ENCODE measurements at regions of chr14 and their contacts with region 1.

Region 1: GRCh38 chr14:23727566-23728335 is 91.6 kb downstream of the DHRS2 start:
- DNase-seq: peak; percentile 37
- H3K4me3 ChIP-seq: no peak overlapping the region
- H3K27ac ChIP-seq: no peak overlapping the region
- H3K4me1 ChIP-seq: no peaks in the 10 kb centered on the region
- H3K27me3 ChIP-seq: no peaks in the 10 kb centered on the region
- CTCF ChIP-seq: peak; percentile 27 to 32
- POLR2A ChIP-seq: no peak

Region 2: DNA sequence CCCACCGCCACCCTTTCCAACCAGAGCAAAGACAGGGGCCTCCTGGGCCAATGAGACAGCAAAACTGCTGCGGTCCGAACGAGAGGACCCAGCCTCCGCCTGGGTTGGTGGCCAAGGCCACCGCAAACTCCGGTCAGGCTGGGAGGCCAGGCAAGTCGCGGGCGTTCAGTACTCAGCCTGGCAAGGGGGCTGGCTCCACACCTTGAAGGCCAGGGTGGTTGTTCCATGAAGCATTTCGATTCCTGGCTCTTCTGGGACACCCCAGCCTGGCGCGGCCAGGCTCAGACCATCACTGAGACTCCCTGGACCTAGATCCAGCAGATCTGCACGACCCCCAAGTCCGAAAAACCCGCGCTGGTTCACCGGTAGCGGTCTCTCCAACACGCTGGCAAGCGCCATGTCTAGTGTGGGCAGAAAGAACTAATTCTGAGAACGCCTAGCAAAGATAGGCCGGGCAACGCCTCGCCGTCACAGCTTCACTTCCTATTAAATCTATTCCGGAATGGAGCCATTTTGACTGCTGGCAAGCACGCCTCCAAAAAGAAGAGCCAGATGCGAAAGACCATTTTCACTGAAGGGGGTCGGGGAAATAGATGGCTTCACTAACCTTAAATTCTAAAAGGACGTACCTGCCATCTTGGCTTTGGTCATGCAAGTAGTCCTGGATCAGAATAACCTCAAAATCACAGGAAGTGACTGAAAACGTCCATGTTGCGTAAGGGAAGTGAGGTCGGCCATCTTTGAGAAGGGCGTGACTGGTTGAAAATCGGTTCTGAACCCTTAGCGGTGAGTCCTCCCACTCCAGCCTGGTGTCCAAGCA is 693.1 kb before region 1 on chr14 and contains the start of gene PSMB5:
- CTCF ChIA-PET with region 1: no interaction called
- POLR2A ChIA-PET with region 1: no interaction called
- dilution Hi-C with region 1: no loop called
- intact Hi-C with region 1: no loop called
- DNase-seq: peak; percentile 97
- H3K4me3 ChIP-seq: peak within 1 kb of the TSS; percentile 73 to 88 (median 84)
- H3K27ac ChIP-seq: peak within 1 kb of the TSS; percentile 88
- H3K4me1 ChIP-seq: peaks cover 12% of the 10 kb centered on the region
- H3K27me3 ChIP-seq: no peaks in the 10 kb centered on the region
- CTCF ChIP-seq: no peak
- POLR2A ChIP-seq: peak; percentile 89
- total RNA-seq, gene PSMB5: 214 and 236 TPM in 2 replicates

Region 3: GRCh38 chr14:23929822-23930294 is 202.1 kb after region 1 on chr14:
- CTCF ChIA-PET with region 1: interaction called, 30 read pairs
- POLR2A ChIA-PET with region 1: no interaction called
- dilution Hi-C with region 1: no loop called
- intact Hi-C with region 1: loop called (anchors 1 kb)
- DNase-seq: peak; percentile 74
- H3K4me3 ChIP-seq: no peak overlapping the region
- H3K27ac ChIP-seq: no peak overlapping the region
- H3K4me1 ChIP-seq: no peaks in the 10 kb centered on the region
- H3K27me3 ChIP-seq: peaks cover 0 to 5% of the 10 kb centered on the region in 2 experiments
- CTCF ChIP-seq: peak; percentile 93
- POLR2A ChIP-seq: no peak

Region 4: GRCh38 chr14:23953464-23954278 is 225.9 kb after region 1 on chr14 and contains the start of gene DHRS4:
- CTCF ChIA-PET with region 1: no interaction called
- POLR2A ChIA-PET with region 1: no interaction called
- dilution Hi-C with region 1: no loop called
- intact Hi-C with region 1: loop called (anchors 1 kb)
- DNase-seq: peak; percentile 82
- H3K4me3 ChIP-seq: peak within 1 kb of the TSS; percentile 67 to 80 (median 72)
- H3K27ac ChIP-seq: peak within 1 kb of the TSS; percentile 44
- H3K4me1 ChIP-seq: no peaks in the 10 kb centered on the region
- H3K27me3 ChIP-seq: no peaks in the 10 kb centered on the region
- CTCF ChIP-seq: peak; percentile 85 to 88
- POLR2A ChIP-seq: peak; percentile 85
- total RNA-seq, gene DHRS4: 19.2 and 24.4 TPM in 2 replicates

Measured in endothelial cell of umbilical vein (primary cell).